ENCODE measurements at regions of chr16 and their contacts with region 1.

Region 1: DNA sequence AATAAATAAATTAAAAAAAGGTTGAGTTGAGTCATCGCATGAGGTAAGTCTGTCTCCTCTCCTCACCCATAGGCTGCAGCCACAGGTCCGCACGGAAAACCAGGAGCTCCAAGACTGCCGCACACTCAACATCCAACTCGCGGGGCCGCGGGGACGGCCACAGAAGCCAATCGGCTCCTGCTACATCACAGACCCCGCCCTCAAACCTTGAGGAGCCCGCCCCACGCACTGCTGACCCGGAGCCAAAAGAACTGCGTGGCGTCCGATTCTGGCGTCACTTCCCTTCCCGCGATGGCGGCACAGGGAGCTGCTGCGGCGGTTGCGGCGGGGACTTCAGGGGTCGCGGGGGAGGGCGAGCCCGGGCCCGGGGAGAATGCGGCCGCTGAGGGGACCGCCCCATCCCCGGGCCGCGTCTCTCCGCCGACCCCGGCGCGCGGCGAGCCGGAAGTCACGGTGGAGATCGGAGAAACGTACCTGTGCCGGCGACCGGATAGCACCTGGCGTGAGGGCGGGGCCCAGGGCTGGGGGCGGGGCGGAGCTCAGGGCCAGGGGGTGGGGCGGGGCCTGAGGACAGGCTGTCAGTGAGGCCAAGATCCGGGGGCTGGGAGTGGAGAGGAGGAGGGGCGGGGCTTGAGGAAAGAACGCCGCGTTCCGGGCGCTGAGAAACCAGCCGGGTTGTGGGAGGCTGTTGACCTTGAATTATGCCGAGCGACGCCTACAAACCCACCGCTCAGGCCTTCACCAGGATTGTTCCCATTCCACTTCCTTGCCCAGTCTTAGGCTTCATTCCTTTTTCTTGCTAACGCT is at the start of gene KAT8:
- DNase-seq: peak; percentile 92
- ATAC-seq: peak; percentile 94
- H3K4me3 Mint-ChIP-seq: peak within 1 kb of the TSS; percentile 85
- H3K27ac Mint-ChIP-seq: peak within 1 kb of the TSS; percentile 85
- H3K4me1 Mint-ChIP-seq: peaks cover 22% of the 10 kb centered on the region
- H3K27me3 Mint-ChIP-seq: no peaks in the 10 kb centered on the region
- CTCF ChIP-seq: no peak
- total RNA-seq, gene KAT8: 82.1 and 93.7 TPM in 2 replicates

Region 2: GRCh38 chr16:30893744-30894539 is 223.7 kb before region 1 on chr16 and contains the start of gene BCL7C:
- CTCF ChIA-PET with region 1: no interaction called
- POLR2A ChIA-PET with region 1: interaction called, 12 read pairs
- intact Hi-C with region 1: no loop called
- DNase-seq: peak; percentile 86
- ATAC-seq: peak; percentile 76
- H3K4me3 Mint-ChIP-seq: peak within 1 kb of the TSS; percentile 84
- H3K27ac Mint-ChIP-seq: peak within 1 kb of the TSS; percentile 88
- H3K4me1 Mint-ChIP-seq: peaks cover 48% of the 10 kb centered on the region
- H3K27me3 Mint-ChIP-seq: no peaks in the 10 kb centered on the region
- CTCF ChIP-seq: no peak
- total RNA-seq, gene BCL7C: 32.2 and 35.7 TPM in 2 replicates

Region 3: GRCh38 chr16:31032736-31033708 is 84.6 kb before region 1 on chr16 and contains the start of gene STX4:
- CTCF ChIA-PET with region 1: no interaction called
- POLR2A ChIA-PET with region 1: interaction called, 11 read pairs
- intact Hi-C with region 1: loop called (anchors 1 kb)
- DNase-seq: peak; percentile 95
- ATAC-seq: peak; percentile 78
- H3K4me3 Mint-ChIP-seq: peak within 1 kb of the TSS; percentile 97
- H3K27ac Mint-ChIP-seq: peak within 1 kb of the TSS; percentile 94
- H3K4me1 Mint-ChIP-seq: peaks cover 17% of the 10 kb centered on the region
- H3K27me3 Mint-ChIP-seq: no peaks in the 10 kb centered on the region
- CTCF ChIP-seq: no peak
- total RNA-seq, gene STX4: 106 and 107 TPM in 2 replicates

Region 4: GRCh38 chr16:31128711-31129567 is 11.3 kb after region 1 on chr16:
- CTCF ChIA-PET with region 1: no interaction called
- POLR2A ChIA-PET with region 1: interaction called, 16 read pairs
- intact Hi-C with region 1: no loop called
- DNase-seq: no peak
- ATAC-seq: no peak
- H3K4me3 Mint-ChIP-seq: no peak overlapping the region
- H3K27ac Mint-ChIP-seq: no peak overlapping the region
- H3K4me1 Mint-ChIP-seq: no peaks in the 10 kb centered on the region
- H3K27me3 Mint-ChIP-seq: no peaks in the 10 kb centered on the region
- CTCF ChIP-seq: no peak

Region 5: DNA sequence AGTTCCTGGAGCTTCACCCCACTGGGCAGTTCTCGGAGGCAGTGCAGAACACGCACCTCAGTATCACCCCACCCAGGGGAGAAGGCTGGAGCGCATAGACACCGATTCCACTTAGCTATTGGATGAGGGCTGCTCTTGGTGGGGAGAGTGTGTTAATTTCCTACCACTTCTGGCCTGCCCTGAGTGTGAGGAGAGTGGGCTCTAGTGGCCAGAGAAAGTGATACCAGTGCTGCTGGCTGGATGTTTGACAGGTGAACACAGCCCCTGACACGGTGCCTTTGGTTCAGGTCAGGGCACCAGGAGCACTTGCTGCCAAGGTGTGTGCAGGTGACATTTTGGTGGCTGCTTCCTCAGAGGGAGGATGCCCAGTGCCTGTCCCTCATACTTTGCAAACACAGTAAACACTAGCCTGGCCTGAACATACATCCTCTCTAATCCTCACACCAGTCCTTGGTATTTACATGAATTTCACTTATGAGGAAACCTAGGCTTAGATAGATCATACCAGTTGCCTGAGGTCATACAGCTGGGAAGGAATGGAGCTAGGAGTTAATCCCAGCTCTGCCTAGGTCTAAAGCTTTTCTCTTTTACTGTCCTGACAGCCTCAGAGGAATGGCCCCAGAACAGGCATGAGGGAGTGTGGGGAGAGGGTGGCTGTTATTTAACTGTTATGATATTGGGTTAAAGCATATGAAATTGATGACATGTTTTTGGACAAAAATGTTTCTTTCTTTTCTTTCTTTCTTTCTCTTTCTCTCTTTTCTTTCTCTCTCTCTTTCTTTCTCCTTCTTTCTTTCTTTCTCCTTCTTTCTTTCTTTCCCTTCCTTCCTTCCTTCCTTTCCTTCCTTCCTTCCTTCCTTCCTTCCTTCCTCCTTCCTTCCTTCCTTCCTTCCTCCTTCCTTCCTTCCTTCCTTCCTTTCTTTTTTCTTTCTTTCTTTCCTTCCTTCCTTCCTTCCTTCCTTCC is 216.4 kb after region 1 on chr16:
- CTCF ChIA-PET with region 1: no interaction called
- POLR2A ChIA-PET with region 1: interaction called, 4 read pairs
- intact Hi-C with region 1: loop called (anchors 10 kb)
- DNase-seq: no peak
- ATAC-seq: peak; percentile 91
- H3K4me3 Mint-ChIP-seq: no peak overlapping the region
- H3K27ac Mint-ChIP-seq: no peak overlapping the region
- H3K4me1 Mint-ChIP-seq: peaks cover 18% of the 10 kb centered on the region
- H3K27me3 Mint-ChIP-seq: peaks cover 13% of the 10 kb centered on the region
- CTCF ChIP-seq: no peak

Measured in activated B cell treated with CpG ODN at 0.5 μM for 24 hours (primary cell).